CD4-positive, alpha-beta memory T cell (primary cell): ENCODE measurements at regions of chr1 and their contacts with region 1.

Region 1: GRCh38 chr1:116514708-116515525 is 55.9 kb downstream of the CD58 start:
- DNase-seq: peak; percentile 70 to 90 (median 75)
- H3K4me3 ChIP-seq: peak overlapping the region; percentile 6 to 21
- H3K4me3 Mint-ChIP-seq: peak overlapping the region; percentile 65 to 88 (median 78)
- H3K27ac ChIP-seq: peak overlapping the region; percentile 74
- H3K27ac Mint-ChIP-seq: peak overlapping the region; percentile 94 to 99 (median 96)
- H3K4me1 ChIP-seq: peaks cover 67% of the 10 kb centered on the region
- H3K4me1 Mint-ChIP-seq: peaks cover 53 to 78% (median 62%) of the 10 kb centered on the region in 4 donors
- H3K27me3 ChIP-seq: no peaks in the 10 kb centered on the region
- H3K27me3 Mint-ChIP-seq: no peaks in the 10 kb centered on the region

Region 2: GRCh38 chr1:116498789-116499628 is 15.9 kb before region 1 on chr1:
- CTCF ChIA-PET with region 1: interaction called, 35 read pairs
- POLR2A ChIA-PET with region 1: interaction called, 117 read pairs
- intact Hi-C with region 1: loop called (anchors 1 kb)
- DNase-seq: peak; percentile 38 to 59 (median 54)
- H3K4me3 ChIP-seq: no peak overlapping the region
- H3K4me3 Mint-ChIP-seq: peak overlapping the region in 1 of 8 donors; percentile 27
- H3K27ac ChIP-seq: no peak overlapping the region
- H3K27ac Mint-ChIP-seq: peak overlapping the region in 6 of 7 donors; percentile 42 to 90 (median 74)
- H3K4me1 ChIP-seq: peaks cover 31% of the 10 kb centered on the region
- H3K4me1 Mint-ChIP-seq: peaks cover 26 to 60% (median 35%) of the 10 kb centered on the region in 4 donors
- H3K27me3 ChIP-seq: no peaks in the 10 kb centered on the region
- H3K27me3 Mint-ChIP-seq: no peaks in the 10 kb centered on the region

Region 3: DNA sequence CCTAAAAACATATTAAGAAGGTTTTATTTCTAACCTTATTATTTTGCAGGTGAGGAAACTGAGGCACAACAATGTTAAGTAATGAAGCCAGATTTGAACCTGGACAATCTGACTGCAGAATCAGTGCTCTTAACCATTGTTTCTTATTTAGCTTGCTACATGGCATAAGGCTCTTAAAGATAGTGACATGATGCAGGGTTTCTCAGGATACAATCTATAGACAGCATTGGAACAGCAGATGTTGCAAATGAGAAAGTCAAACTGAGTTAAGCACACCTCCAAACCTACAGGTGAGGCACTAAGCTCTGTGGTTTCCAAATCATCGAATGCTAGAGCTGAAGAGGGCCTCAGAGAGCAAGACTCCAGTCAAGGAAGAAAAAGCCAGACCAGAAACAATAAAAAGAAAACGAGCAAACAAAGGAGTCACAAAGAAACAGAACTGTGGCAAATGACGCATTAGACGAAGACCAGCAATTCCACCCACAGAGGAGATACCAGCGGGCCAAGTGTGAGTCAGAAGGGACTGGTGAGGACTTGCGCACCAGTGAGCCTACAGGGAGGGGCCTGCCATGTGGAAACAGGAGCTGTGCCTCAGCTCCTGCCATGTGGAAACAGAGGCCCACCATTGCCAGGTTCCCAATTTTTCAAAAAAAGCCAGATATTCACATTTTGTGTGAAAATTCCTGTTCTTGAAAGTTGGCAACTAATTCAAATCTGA is 41.5 kb after region 1 on chr1:
- CTCF ChIA-PET with region 1: interaction called, 5 read pairs
- POLR2A ChIA-PET with region 1: interaction called, 15 read pairs
- intact Hi-C with region 1: loop called (anchors 1 kb)
- DNase-seq: peak; percentile 68 to 92 (median 72)
- H3K4me3 ChIP-seq: no peak overlapping the region
- H3K4me3 Mint-ChIP-seq: peak overlapping the region; percentile 14 to 74 (median 48)
- H3K27ac ChIP-seq: peak overlapping the region; percentile 53
- H3K27ac Mint-ChIP-seq: peak overlapping the region; percentile 79 to 99 (median 88)
- H3K4me1 ChIP-seq: peaks cover 77% of the 10 kb centered on the region
- H3K4me1 Mint-ChIP-seq: peaks cover 60 to 87% (median 75%) of the 10 kb centered on the region in 4 donors
- H3K27me3 ChIP-seq: no peaks in the 10 kb centered on the region
- H3K27me3 Mint-ChIP-seq: no peaks in the 10 kb centered on the region